CD4-positive, alpha-beta T cell (primary cell): ENCODE measurements at regions of chr5 and their contacts with region 1.

Region 1: DNA sequence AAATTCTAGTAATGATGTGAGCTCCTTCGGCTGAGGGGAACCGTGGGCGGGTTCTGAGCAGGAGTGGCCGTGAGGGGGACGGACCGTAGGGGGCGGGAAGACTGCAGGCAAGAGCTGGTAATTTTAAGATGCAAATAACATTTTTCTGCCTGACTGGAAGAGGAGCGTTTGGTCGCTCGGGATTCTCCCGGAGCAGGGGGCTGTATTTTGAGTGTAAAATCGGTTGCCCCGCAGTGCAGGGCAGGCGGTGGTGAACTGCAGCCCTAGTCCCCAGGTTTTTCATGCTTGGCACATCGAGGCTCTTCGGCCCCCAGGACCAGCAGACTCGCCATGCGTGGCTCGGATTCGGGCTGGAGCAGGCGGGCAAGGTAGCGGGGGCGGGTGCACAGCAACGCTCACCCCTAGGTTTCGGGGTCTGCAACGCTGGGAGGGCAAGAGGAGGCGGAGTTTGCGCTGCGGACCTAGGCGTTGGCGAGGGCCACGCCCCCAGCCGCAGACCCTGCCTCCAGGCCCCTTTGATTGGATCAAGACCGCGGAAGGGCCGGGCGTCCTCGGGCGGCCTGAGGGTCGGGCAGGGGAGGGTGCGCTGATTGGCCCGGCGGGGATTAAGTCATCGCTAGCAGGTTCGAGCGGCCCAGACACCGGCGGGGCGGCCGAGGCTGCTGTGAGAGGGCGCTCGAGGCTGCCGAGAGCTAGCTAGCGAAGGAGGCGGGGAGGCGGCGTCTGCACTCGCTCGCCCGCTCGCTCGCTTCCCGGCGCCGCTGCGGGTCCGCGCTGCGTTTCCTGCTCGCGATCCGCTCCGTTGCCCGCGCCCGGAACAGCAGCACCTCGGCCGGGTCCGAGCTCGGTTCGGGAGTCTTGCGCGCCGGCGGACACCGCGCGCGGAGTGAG is at the start of gene ARHGAP26:
- DNase-seq: peak; percentile 81 to 96 (median 91)
- ATAC-seq: peak; percentile 83
- H3K4me3 ChIP-seq: peak within 1 kb of the TSS; percentile 99
- H3K4me3 Mint-ChIP-seq: peak within 1 kb of the TSS; percentile 96
- H3K27ac ChIP-seq: peak within 1 kb of the TSS; percentile 69 to 72
- H3K27ac Mint-ChIP-seq: peak within 1 kb of the TSS; percentile 87
- H3K4me1 ChIP-seq: peaks cover 32% of the 10 kb centered on the region
- H3K4me1 Mint-ChIP-seq: peaks cover 32% of the 10 kb centered on the region
- H3K27me3 ChIP-seq: no peaks in the 10 kb centered on the region
- H3K27me3 Mint-ChIP-seq: no peaks in the 10 kb centered on the region
- CTCF ChIP-seq: peak; percentile 27
- total RNA-seq, gene ARHGAP26: 24.9 to 27.3 TPM

Region 2: GRCh38 chr5:141923448-141924352 is 846.3 kb before region 1 on chr5 and contains the start of gene DELE1:
- CTCF ChIA-PET with region 1: no interaction called
- POLR2A ChIA-PET with region 1: no interaction called
- intact Hi-C with region 1: loop called in 1 of 2 experiments (anchors 5 kb)
- DNase-seq: peak; percentile 82 to 95 (median 87)
- ATAC-seq: peak; percentile 94
- H3K4me3 ChIP-seq: peak within 1 kb of the TSS; percentile 75
- H3K4me3 Mint-ChIP-seq: peak within 1 kb of the TSS; percentile 96
- H3K27ac ChIP-seq: peak within 1 kb of the TSS; percentile 94 to 96
- H3K27ac Mint-ChIP-seq: peak within 1 kb of the TSS; percentile 99
- H3K4me1 ChIP-seq: peaks cover 30% of the 10 kb centered on the region
- H3K4me1 Mint-ChIP-seq: peaks cover 45% of the 10 kb centered on the region
- H3K27me3 ChIP-seq: no peaks in the 10 kb centered on the region
- H3K27me3 Mint-ChIP-seq: no peaks in the 10 kb centered on the region
- CTCF ChIP-seq: no peak
- total RNA-seq, gene DELE1: 60.0 to 61.1 TPM

Region 3: DNA sequence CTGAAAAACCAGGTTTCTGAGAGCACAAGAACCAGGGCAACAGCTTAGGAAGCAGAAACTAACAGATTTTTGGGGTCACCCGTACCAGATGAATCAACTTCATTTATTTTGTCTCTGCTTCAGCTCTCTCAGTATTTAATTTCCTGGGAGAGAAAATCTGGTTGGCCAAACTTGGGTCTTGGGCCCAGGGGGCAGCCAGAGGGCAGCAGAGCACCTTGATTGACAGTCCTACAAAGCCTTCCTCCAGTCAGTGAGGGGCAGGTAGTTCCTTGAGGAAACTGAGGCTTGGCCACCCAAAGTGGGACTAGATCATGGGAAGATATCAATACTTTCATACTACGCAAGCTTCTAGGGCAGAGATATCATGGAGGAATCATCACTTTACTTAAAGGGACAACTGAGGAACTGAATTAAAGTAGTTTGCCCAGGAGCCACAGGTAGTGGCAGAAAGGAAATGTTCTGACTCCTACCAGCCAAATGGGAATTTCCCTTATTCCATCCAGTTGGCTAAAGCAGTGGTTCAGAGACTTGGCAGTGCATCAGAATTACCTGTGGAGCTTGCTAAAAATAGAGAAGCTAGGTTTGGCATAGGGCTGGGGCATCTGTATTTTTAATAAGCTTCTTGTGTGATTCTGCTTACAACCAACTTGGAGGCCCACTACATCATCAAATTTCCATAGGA is 21.3 kb before region 1 on chr5:
- CTCF ChIA-PET with region 1: interaction called, 5 read pairs
- POLR2A ChIA-PET with region 1: interaction called, 10 read pairs
- intact Hi-C with region 1: no loop called
- DNase-seq: peak; percentile 29 to 74 (median 50)
- ATAC-seq: peak; percentile 55
- H3K4me3 ChIP-seq: no peak overlapping the region
- H3K4me3 Mint-ChIP-seq: no peak overlapping the region
- H3K27ac ChIP-seq: no peak overlapping the region
- H3K27ac Mint-ChIP-seq: no peak overlapping the region
- H3K4me1 ChIP-seq: no peaks in the 10 kb centered on the region
- H3K4me1 Mint-ChIP-seq: no peaks in the 10 kb centered on the region
- H3K27me3 ChIP-seq: no peaks in the 10 kb centered on the region
- H3K27me3 Mint-ChIP-seq: peaks cover 10% of the 10 kb centered on the region
- CTCF ChIP-seq: peak; percentile 70

Region 4: DNA sequence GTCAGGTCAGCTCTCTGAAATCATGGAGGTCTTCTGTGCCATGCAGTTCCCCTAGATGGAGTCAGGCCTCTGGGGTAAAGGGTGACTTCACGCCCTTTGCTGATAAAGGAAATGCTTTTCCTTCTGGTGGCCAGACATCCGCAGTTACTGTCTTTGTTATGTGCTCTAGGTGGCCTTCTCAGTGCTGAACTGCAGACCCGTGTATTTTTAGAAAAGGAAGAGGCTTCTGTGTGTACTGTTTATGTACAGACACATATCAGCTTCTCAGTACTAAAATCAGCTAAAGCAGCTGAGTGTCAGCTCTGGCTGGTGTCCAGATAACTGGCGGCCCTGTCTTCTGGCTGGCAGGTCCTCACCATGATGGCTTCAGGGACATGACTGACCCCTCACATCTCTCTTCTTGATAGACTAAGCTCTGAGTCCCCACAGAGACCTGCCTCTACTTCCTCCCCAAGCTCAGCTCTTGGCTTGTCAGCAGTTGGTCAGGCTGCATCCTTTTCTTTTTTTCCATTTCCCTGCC is 75.5 kb after region 1 on chr5:
- CTCF ChIA-PET with region 1: interaction called, 3 read pairs
- POLR2A ChIA-PET with region 1: interaction called, 12 read pairs
- intact Hi-C with region 1: no loop called
- DNase-seq: peak in 2 of 14 experiments; percentile 17 to 38
- ATAC-seq: no peak
- H3K4me3 ChIP-seq: no peak overlapping the region
- H3K4me3 Mint-ChIP-seq: peak overlapping the region; percentile 1
- H3K27ac ChIP-seq: peak overlapping the region in 1 of 2 donors; percentile 14
- H3K27ac Mint-ChIP-seq: peak overlapping the region; percentile 62
- H3K4me1 ChIP-seq: peaks cover 20% of the 10 kb centered on the region
- H3K4me1 Mint-ChIP-seq: peaks cover 61% of the 10 kb centered on the region
- H3K27me3 ChIP-seq: no peaks in the 10 kb centered on the region
- H3K27me3 Mint-ChIP-seq: no peaks in the 10 kb centered on the region
- CTCF ChIP-seq: no peak

Region 5: DNA sequence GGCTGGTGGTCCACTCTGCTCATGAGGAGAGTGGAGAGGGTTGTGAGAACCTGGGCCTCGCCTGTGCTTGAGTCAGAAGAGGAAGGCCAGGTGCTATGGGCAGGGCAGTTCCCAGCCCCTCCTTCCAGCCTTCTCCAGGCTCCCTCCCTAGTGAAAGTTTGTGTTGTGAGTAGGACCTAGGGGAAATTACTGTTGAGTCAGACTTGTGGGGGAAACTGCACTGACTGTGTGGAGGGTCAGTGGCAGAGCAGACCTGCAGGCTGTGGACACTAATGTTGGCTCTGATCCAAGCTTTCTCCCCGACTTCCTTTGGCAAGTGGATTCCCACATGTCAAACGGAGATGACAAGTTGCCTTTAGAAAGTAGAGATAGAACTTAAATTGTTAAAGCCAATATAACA is 102.8 kb after region 1 on chr5:
- CTCF ChIA-PET with region 1: interaction called, 28 read pairs
- POLR2A ChIA-PET with region 1: interaction called, 13 read pairs
- intact Hi-C with region 1: loop called (anchors 1 to 2 kb)
- DNase-seq: peak in 2 of 14 experiments; percentile 17 to 34
- ATAC-seq: no peak
- H3K4me3 ChIP-seq: no peak overlapping the region
- H3K4me3 Mint-ChIP-seq: no peak overlapping the region
- H3K27ac ChIP-seq: no peak overlapping the region
- H3K27ac Mint-ChIP-seq: no peak overlapping the region
- H3K4me1 ChIP-seq: no peaks in the 10 kb centered on the region
- H3K4me1 Mint-ChIP-seq: no peaks in the 10 kb centered on the region
- H3K27me3 ChIP-seq: no peaks in the 10 kb centered on the region
- H3K27me3 Mint-ChIP-seq: no peaks in the 10 kb centered on the region
- CTCF ChIP-seq: no peak

Region 6: GRCh38 chr5:142971303-142972013 is 201.5 kb after region 1 on chr5:
- CTCF ChIA-PET with region 1: no interaction called
- POLR2A ChIA-PET with region 1: no interaction called
- intact Hi-C with region 1: no loop called
- DNase-seq: no peak
- ATAC-seq: no peak
- H3K4me3 ChIP-seq: no peak overlapping the region
- H3K4me3 Mint-ChIP-seq: no peak overlapping the region
- H3K27ac ChIP-seq: no peak overlapping the region
- H3K27ac Mint-ChIP-seq: no peak overlapping the region
- H3K4me1 ChIP-seq: peaks cover 8% of the 10 kb centered on the region
- H3K4me1 Mint-ChIP-seq: peaks cover 31% of the 10 kb centered on the region
- H3K27me3 ChIP-seq: no peaks in the 10 kb centered on the region
- H3K27me3 Mint-ChIP-seq: no peaks in the 10 kb centered on the region
- CTCF ChIP-seq: no peak

Region 7: DNA sequence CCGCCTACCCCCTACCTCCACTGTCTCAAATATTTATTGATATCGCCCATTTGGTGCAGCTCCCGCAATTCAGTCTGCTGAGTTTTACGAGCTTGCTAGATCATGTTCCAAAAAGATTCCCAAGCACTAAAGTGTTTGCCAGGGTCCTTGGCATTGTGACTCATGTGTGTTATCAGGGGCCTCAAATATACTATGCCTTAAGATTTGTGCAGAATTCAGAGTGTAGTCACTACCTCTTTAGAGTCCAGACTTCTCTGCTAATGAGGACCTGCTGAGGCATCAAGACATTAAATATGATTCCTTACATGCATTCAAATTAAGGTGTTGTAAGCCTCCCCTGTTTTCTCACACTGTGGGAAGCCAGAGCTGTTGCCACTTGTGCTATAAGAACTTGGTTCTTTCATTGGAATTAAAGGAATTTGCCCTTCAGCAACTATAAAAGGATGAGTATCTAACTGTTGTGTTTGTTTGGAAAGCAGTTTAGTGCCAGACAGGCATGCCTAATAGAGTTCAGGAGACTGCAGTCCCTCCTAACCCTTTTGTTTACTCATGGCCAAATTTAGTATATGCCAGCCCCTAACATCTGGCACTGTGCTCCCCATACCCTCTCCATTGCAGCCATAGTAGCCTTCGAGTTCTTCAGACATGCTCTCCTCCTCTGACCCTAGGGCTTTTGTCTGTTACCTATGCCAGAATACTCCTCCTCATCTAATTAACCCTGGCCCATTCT is 317.1 kb after region 1 on chr5:
- CTCF ChIA-PET with region 1: no interaction called
- POLR2A ChIA-PET with region 1: no interaction called
- intact Hi-C with region 1: no loop called
- DNase-seq: no peak
- ATAC-seq: no peak
- H3K4me3 ChIP-seq: no peak overlapping the region
- H3K4me3 Mint-ChIP-seq: no peak overlapping the region
- H3K27ac ChIP-seq: no peak overlapping the region
- H3K27ac Mint-ChIP-seq: no peak overlapping the region
- H3K4me1 ChIP-seq: no peaks in the 10 kb centered on the region
- H3K4me1 Mint-ChIP-seq: no peaks in the 10 kb centered on the region
- H3K27me3 ChIP-seq: no peaks in the 10 kb centered on the region
- H3K27me3 Mint-ChIP-seq: no peaks in the 10 kb centered on the region
- CTCF ChIP-seq: no peak

Region 8: GRCh38 chr5:144170276-144171024 is 1400.5 kb after region 1 on chr5 and contains the starts of genes KCTD16 and YIPF5:
- CTCF ChIA-PET with region 1: no interaction called
- POLR2A ChIA-PET with region 1: interaction called, 4 read pairs
- intact Hi-C with region 1: loop called in 1 of 2 experiments (anchors 5 kb)
- DNase-seq: peak; percentile 93 to 99 (median 96)
- ATAC-seq: peak; percentile 96
- H3K4me3 ChIP-seq: peak within 1 kb of the TSS; percentile 79
- H3K4me3 Mint-ChIP-seq: peak within 1 kb of the TSS; percentile 95
- H3K27ac ChIP-seq: peak within 1 kb of the TSS; percentile 91
- H3K27ac Mint-ChIP-seq: peak within 1 kb of the TSS; percentile 95
- H3K4me1 ChIP-seq: peaks cover 11% of the 10 kb centered on the region
- H3K4me1 Mint-ChIP-seq: peaks cover 53% of the 10 kb centered on the region
- H3K27me3 ChIP-seq: no peaks in the 10 kb centered on the region
- H3K27me3 Mint-ChIP-seq: no peaks in the 10 kb centered on the region
- CTCF ChIP-seq: no peak
- total RNA-seq, gene KCTD16: not detected
- total RNA-seq, gene YIPF5: 57.6 to 64.8 TPM